ENCODE measurements at regions of chr22 and their contacts with region 1.

Region 1: DNA sequence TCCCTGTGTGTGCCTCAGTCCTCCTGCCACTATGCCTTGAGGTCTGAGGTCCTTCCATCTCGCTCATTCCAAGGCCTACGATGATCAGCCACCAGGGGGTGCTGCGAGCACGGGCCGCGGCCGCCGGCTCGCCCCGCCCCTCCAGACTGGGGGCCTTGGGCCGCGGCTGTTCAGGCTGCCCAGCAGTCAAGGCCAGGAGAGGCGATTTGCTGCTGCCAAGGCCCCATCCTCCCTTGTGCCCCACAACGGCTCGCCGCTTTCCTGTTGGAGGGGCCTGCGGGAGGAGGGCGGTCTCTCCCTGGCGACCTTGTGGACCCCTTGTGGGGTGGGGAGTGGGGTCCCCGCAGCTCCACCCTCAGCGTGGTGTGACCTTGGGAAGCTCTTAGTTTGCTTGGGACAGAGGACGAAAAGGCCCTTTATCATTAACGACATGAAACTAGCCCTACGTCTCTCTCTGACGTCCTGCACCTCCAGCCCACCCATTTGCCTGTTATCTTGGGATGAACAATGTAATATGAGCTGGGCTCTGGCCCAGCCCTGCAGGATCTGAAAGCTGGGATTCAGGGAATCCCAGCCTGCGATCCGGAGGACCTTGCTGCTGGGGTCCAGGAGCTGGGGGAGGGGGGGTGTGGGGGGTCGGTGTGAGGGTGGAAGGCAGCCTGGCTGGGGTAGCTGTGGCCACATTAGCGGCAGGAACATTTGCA is 5.3 kb upstream of the GALR3 start:
- DNase-seq: peak; percentile 86 to 95
- ATAC-seq: peak; percentile 93
- H3K4me3 ChIP-seq: no peak overlapping the region
- H3K27ac ChIP-seq: no peak overlapping the region
- H3K4me1 ChIP-seq: no peaks in the 10 kb centered on the region
- H3K27me3 ChIP-seq: no peaks in the 10 kb centered on the region

Region 2: DNA sequence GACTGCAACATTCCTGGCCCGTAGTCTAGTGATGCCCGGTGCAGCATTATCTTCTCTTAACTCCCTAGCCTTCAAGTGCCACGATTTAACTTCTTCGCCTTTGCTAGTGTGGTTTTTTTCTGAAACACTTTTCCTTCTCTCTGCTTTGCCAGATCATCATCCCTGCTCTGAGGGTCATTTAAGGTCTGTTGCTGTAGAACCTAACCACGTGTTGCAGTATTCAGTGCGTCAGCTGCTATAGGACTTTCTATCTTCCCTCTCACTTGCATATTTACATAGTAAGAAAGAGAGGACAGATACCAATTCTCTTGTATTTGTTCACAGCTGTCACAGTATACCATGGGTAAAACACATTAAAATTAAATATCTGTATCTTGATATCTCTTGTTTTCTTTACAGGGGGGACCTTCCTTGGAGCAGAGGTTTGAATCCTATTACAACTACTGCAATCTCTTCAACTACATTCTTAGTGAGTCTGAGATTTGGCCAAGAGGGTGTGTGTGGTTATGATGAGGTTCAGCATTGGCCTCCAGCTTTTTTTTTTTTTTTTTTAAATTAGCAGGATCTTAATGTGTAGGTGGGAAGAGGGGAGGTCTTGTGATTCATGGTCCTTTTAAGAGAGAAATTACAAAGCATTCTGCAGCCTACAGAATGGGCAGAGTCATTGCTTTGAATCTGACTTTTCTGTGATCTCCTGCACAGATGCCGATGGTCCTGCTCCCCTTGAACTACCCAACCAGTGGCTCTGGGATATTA is 44.9 kb after region 1 on chr22:
- intact Hi-C with region 1: loop called (anchors 2 kb)
- DNase-seq: no peak
- ATAC-seq: no peak
- H3K4me3 ChIP-seq: no peak overlapping the region
- H3K27ac ChIP-seq: no peak overlapping the region
- H3K4me1 ChIP-seq: no peaks in the 10 kb centered on the region
- H3K27me3 ChIP-seq: no peaks in the 10 kb centered on the region

Region 3: GRCh38 chr22:37965940-37966664 is 148.2 kb after region 1 on chr22:
- intact Hi-C with region 1: loop called (anchors 1 to 2 kb)
- DNase-seq: no peak
- ATAC-seq: no peak
- H3K4me3 ChIP-seq: no peak overlapping the region
- H3K27ac ChIP-seq: no peak overlapping the region
- H3K4me1 ChIP-seq: no peaks in the 10 kb centered on the region
- H3K27me3 ChIP-seq: no peaks in the 10 kb centered on the region